ENCODE measurements at regions of chr2 and their contacts with region 1.

Region 1: GRCh38 chr2:33475224-33476130 is 972 bp upstream of the RASGRP3 start:
- DNase-seq: peak; percentile 89
- H3K4me3 Mint-ChIP-seq: peak overlapping the region; percentile 81
- H3K27ac Mint-ChIP-seq: peak overlapping the region; percentile 91
- H3K4me1 Mint-ChIP-seq: peaks cover 25% of the 10 kb centered on the region
- H3K27me3 Mint-ChIP-seq: no peaks in the 10 kb centered on the region

Region 2: GRCh38 chr2:32591669-32592463 is 883.6 kb before region 1 on chr2:
- CTCF ChIA-PET with region 1: no interaction called
- intact Hi-C with region 1: loop called (anchors 5 kb)
- DNase-seq: peak; percentile 20
- H3K4me3 Mint-ChIP-seq: peak overlapping the region; percentile 39
- H3K27ac Mint-ChIP-seq: peak overlapping the region; percentile 90
- H3K4me1 Mint-ChIP-seq: peaks cover 36% of the 10 kb centered on the region
- H3K27me3 Mint-ChIP-seq: no peaks in the 10 kb centered on the region

Region 3: DNA sequence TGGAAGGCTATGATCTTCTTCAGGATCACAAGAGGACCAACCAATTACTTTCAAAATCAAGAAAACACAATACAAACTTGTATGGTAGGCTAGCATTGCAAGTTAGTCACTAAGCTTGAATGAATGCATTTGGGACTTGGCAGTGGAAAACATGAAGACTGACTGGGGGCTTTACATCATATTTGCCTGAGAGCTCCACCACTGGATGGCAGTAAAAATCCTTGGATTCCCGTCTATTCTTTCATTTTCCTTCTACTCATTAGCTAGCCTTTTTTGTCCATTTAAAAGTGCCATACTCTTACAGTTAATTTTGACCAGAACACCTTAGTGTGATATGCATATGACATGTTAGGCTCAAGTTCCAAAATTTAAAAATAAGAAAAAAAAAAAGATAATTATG is 62.6 kb before region 1 on chr2:
- CTCF ChIA-PET with region 1: no interaction called
- intact Hi-C with region 1: loop called (anchors 2 kb)
- DNase-seq: peak; percentile 11
- H3K4me3 Mint-ChIP-seq: no peak overlapping the region
- H3K27ac Mint-ChIP-seq: no peak overlapping the region
- H3K4me1 Mint-ChIP-seq: no peaks in the 10 kb centered on the region
- H3K27me3 Mint-ChIP-seq: peaks cover 2% of the 10 kb centered on the region

Region 4: DNA sequence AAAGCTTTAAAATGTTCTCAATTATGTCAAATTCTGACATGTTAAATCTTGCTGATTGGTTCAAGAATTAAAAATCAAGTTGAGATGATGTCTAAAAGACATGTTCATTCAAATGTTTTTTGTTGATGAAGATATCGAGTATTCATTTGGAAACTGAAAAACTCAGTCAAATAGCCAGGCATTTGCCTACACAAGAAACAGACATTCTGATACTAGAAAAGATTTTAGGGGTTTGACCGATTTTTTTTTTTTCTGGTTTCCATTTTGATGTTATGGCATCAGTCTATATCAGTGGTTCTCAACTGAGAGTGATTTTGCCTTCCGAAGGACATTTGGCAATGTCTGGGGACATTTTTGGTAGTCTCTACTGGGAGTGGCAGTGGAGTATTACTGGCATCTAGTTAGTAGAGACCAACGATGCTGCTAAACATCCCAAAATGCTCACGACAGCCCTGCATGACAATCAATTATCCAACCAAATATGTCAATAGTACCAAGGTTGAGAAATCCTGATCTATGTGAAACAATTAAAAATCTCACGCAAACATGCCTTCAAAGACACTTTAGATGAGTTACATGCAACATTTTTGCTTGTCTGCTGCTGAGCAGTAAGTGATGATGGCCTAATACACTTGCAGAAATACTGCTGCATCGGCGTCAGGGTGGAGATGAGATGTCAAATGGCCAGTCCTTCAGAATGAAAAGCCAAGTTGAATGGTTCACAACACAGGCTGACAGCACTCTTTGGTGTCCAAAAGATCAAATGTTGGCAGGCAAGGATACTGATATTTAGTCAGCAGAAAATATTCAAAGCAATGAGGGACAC is 13.5 kb after region 1 on chr2:
- CTCF ChIA-PET with region 1: interaction called, 6 read pairs
- intact Hi-C with region 1: loop called (anchors 1 kb)
- DNase-seq: no peak
- H3K4me3 Mint-ChIP-seq: no peak overlapping the region
- H3K27ac Mint-ChIP-seq: no peak overlapping the region
- H3K4me1 Mint-ChIP-seq: peaks cover 16% of the 10 kb centered on the region
- H3K27me3 Mint-ChIP-seq: peaks cover 8% of the 10 kb centered on the region

Region 5: DNA sequence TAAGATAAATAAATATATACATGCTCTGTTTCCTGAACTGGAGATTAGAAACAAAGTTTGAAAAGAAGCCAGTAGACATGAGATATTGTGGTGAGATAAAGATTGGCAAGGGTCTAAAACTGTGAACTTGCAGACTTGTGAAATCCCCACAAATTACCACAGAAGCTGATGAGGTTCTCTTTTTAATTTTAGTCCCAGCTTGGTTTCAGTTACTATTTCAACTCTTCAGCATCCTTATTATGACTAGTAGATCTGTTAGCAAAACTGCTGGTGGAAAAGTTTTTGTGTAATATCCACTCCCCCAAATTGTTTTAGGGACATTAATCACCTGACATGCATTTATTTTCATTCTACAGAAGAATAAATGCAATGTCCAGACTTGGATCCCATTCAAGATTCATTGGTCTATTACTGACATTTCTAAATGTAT is 21.8 kb after region 1 on chr2:
- CTCF ChIA-PET with region 1: interaction called, 5 read pairs
- intact Hi-C with region 1: loop called (anchors 1 kb)
- DNase-seq: no peak
- H3K4me3 Mint-ChIP-seq: no peak overlapping the region
- H3K27ac Mint-ChIP-seq: no peak overlapping the region
- H3K4me1 Mint-ChIP-seq: peaks cover 18% of the 10 kb centered on the region
- H3K27me3 Mint-ChIP-seq: peaks cover 5% of the 10 kb centered on the region

Region 6: DNA sequence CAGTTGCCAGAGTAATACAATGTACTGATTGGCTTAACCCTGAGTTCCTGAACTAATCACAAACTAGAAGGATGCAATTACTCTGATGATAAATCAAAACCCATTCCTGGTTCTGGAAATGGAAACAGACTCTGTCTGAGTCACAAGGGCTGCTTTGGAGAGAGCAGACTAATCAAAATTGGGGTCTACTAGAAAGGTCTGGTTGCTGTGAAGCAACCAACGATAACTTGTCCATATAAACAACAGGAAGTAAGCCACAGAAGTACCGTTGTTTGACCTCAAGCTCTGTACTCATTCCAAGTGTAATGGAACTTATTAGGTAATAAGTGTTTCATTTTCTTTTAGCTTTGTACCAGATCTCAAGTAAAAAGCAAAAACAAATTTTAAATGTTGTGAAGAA is 50.7 kb after region 1 on chr2:
- CTCF ChIA-PET with region 1: interaction called, 3 read pairs
- intact Hi-C with region 1: loop called (anchors 1 kb)
- DNase-seq: no peak
- H3K4me3 Mint-ChIP-seq: no peak overlapping the region
- H3K27ac Mint-ChIP-seq: no peak overlapping the region
- H3K4me1 Mint-ChIP-seq: peaks cover 7% of the 10 kb centered on the region
- H3K27me3 Mint-ChIP-seq: no peaks in the 10 kb centered on the region

Region 7: DNA sequence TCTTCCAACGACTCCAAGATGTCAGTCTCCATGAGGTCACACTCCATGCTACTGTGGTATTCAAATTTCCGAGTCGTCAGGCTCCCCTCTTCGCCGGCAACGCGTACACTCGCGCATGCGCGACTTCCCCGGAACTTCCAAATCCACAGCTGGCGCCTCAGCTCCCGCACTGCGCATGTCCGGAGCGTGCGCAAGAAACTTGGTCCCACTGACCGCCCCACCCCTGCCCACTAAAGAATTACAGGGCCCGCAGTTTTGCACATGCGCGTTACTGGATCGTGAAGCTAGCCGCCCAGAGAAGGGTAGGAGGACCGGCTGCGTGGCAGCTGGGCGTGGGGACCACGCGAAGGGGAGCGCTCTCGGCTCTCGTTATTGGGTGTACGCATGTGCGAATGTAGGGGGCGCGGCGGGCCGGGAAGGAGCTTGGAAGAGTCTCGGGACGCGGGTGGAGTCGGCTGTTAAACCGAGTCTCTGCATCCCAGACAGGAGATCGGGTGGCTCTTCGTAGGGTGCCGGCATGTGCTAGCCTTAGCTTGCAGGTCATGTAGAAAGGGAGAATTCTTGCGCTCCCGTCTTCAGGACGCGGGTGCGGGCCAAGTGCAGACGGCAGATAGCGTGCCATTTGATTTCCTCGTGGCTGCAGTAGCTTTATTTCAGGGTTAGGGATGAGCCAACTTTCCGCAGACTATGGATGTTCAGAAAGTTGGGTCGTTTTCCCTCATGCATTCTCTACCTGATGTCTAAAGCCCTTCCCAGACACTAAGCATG is 123.9 kb after region 1 on chr2 and contains the start of gene FAM98A:
- CTCF ChIA-PET with region 1: interaction called, 6 read pairs
- intact Hi-C with region 1: loop called (anchors 1 kb)
- DNase-seq: peak; percentile 98
- H3K4me3 Mint-ChIP-seq: peak within 1 kb of the TSS; percentile 95
- H3K27ac Mint-ChIP-seq: peak within 1 kb of the TSS; percentile 87
- H3K4me1 Mint-ChIP-seq: peaks cover 22% of the 10 kb centered on the region
- H3K27me3 Mint-ChIP-seq: no peaks in the 10 kb centered on the region
- total RNA-seq, gene FAM98A: 45.4 to 46.1 TPM

Region 8: GRCh38 chr2:33859811-33860461 is 384.5 kb after region 1 on chr2:
- CTCF ChIA-PET with region 1: no interaction called
- intact Hi-C with region 1: no loop called
- DNase-seq: no peak
- H3K4me3 Mint-ChIP-seq: no peak overlapping the region
- H3K27ac Mint-ChIP-seq: no peak overlapping the region
- H3K4me1 Mint-ChIP-seq: peaks cover 7% of the 10 kb centered on the region
- H3K27me3 Mint-ChIP-seq: no peaks in the 10 kb centered on the region